Dendritic cell treated with granulocyte-macrophage colony-stimulating factor and Interleukin-4, amounts not matched to agents 40 ng/mL and 50 ng/mL, for 4 days (primary cell): ENCODE measurements at regions of chr5 and their contacts with region 1.

Region 1: GRCh38 chr5:170420780-170421412 is 31.7 kb upstream of the KCNMB1 start:
- H3K4me3 Mint-ChIP-seq: no peak overlapping the region
- H3K27ac Mint-ChIP-seq: no peak overlapping the region
- H3K4me1 Mint-ChIP-seq: peaks cover 22% of the 10 kb centered on the region
- H3K27me3 Mint-ChIP-seq: peaks cover 11% of the 10 kb centered on the region

Region 2: GRCh38 chr5:170100066-170100943 is 320.6 kb before region 1 on chr5:
- intact Hi-C with region 1: loop called (anchors 10 kb)
- H3K4me3 Mint-ChIP-seq: no peak overlapping the region
- H3K27ac Mint-ChIP-seq: peak overlapping the region; percentile 1
- H3K4me1 Mint-ChIP-seq: peaks cover 33% of the 10 kb centered on the region
- H3K27me3 Mint-ChIP-seq: peaks cover 5% of the 10 kb centered on the region

Region 3: DNA sequence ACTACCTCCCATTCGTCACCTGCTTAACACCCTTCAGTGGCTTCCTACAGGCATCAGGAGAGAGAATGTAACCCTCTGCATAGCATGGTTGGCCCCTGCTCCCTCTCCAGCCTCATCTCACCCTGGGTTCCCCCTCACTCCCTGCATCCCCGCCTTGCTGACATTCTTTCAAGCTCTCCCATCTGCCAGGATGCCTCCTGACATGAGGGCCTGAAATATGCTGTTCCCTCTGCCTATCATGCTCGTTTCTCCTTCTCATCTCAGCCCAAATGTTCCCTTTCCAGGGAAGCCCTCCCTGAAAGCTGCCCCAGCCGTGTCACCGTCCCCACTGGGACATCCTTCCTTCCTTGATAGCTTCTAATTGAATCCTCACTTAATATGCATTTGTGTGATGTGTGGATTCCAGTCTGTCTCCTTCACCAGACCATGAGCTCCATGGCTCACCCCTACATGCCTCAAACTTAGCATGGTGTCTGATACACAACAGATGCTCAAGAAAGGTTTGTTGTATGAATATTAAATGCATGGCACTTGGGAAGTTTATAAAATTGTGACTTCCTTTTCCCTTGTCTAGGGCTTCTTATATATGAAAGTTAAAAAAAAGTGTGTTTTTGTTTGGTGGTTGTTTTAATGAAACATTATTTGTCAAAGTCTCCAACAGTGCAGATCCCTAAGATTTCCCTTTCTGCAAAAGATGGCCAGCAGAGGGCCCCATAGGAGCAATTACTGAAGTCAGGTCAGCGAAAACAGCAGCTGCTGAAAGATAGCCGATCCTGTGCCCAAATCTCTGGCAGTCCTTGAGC is 195.4 kb before region 1 on chr5:
- intact Hi-C with region 1: loop called (anchors 1 kb)
- H3K4me3 Mint-ChIP-seq: no peak overlapping the region
- H3K27ac Mint-ChIP-seq: no peak overlapping the region
- H3K4me1 Mint-ChIP-seq: no peaks in the 10 kb centered on the region
- H3K27me3 Mint-ChIP-seq: peaks cover 3% of the 10 kb centered on the region

Region 4: GRCh38 chr5:170267431-170268152 is 153.3 kb before region 1 on chr5:
- intact Hi-C with region 1: loop called (anchors 5 kb)
- H3K4me3 Mint-ChIP-seq: no peak overlapping the region
- H3K27ac Mint-ChIP-seq: peak overlapping the region; percentile 20
- H3K4me1 Mint-ChIP-seq: peaks cover 63% of the 10 kb centered on the region
- H3K27me3 Mint-ChIP-seq: no peaks in the 10 kb centered on the region

Region 5: DNA sequence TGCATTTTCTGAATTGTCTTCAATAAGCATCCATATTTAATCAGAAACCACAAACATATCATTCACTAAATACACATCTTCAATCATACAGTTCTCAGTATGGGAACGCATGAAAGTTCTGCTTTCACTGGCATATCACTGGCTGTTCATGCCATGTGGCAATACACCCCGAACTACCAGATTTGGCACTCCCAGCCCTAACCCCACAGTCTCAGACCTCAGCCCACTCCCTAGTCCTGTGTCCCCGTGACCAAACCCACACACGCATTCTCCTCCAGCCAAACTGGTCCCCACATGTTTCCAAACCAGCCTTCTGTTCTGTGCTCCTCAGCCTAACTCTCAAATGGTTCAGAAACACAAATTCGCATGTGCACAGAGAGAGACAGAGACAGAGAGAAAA is 52.3 kb before region 1 on chr5:
- intact Hi-C with region 1: no loop called
- H3K4me3 Mint-ChIP-seq: no peak overlapping the region
- H3K27ac Mint-ChIP-seq: no peak overlapping the region
- H3K4me1 Mint-ChIP-seq: peaks cover 55% of the 10 kb centered on the region
- H3K27me3 Mint-ChIP-seq: no peaks in the 10 kb centered on the region